CD8-positive, alpha-beta T cell (primary cell): ENCODE measurements at regions of chr7 and their contacts with region 1.

Region 1: GRCh38 chr7:128862571-128863432 is at the start of gene ATP6V1F:
- DNase-seq: peak; percentile 97 to 100 (median 99)
- ATAC-seq: peak; percentile 87
- H3K4me3 ChIP-seq: peak within 1 kb of the TSS; percentile 80 to 92
- H3K4me3 Mint-ChIP-seq: peak within 1 kb of the TSS; percentile 96
- H3K27ac ChIP-seq: peak within 1 kb of the TSS; percentile 71 to 74
- H3K27ac Mint-ChIP-seq: peak within 1 kb of the TSS; percentile 94
- H3K4me1 ChIP-seq: peaks cover 17% of the 10 kb centered on the region
- H3K4me1 Mint-ChIP-seq: peaks cover 34% of the 10 kb centered on the region
- H3K27me3 ChIP-seq: no peaks in the 10 kb centered on the region
- H3K27me3 Mint-ChIP-seq: no peaks in the 10 kb centered on the region
- CTCF ChIP-seq: no peak
- total RNA-seq, gene ATP6V1F: 54.8 to 59.3 TPM

Region 2: DNA sequence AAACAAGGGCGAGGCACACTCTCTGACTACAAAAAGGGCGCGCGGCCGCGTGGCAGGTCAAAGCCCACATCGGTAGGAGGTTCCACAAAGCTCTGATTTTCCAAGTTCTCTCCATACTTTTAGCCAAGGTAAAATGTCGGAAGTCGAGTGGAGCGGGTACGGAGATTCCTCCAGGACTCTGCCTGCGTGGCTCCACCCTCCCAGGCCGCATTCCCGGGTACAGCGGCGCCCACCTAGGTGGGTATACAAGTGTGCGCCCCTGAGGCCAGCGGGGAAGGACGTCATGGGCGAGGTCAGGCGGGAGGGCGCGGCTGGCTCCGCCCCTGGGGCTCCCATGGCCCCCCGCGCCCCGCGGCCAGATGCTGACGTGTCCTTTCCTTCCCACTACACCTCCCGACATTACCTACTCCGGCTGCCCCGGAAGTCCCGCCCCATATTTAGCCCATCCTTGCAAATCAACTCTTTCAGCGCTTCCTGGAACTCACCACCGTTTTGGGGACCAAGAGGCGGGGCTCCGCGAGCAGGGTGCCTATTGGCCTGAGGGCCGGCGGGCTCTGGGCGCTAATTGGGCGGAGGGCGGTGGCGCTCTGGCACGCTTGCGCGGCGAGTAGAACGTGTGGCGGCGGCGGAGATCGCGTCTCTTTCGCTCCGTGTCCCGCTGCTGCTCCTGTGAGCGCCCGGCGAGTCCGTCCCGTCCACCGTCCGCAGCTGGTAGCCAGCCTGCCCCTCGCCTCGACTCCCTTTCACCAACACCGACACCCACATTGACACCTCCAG is 1211.1 kb before region 1 on chr7 and contains the start of gene SND1:
- CTCF ChIA-PET with region 1: no interaction called
- POLR2A ChIA-PET with region 1: no interaction called
- intact Hi-C with region 1: loop called in 1 of 2 experiments (anchors 10 kb)
- DNase-seq: peak; percentile 96 to 100 (median 98)
- ATAC-seq: peak; percentile 94
- H3K4me3 ChIP-seq: peak within 1 kb of the TSS; percentile 82 to 98
- H3K4me3 Mint-ChIP-seq: peak within 1 kb of the TSS; percentile 98
- H3K27ac ChIP-seq: peak within 1 kb of the TSS; percentile 92 to 98
- H3K27ac Mint-ChIP-seq: peak within 1 kb of the TSS; percentile 99
- H3K4me1 ChIP-seq: peaks cover 35% of the 10 kb centered on the region
- H3K4me1 Mint-ChIP-seq: peaks cover 50% of the 10 kb centered on the region
- H3K27me3 ChIP-seq: no peaks in the 10 kb centered on the region
- H3K27me3 Mint-ChIP-seq: no peaks in the 10 kb centered on the region
- CTCF ChIP-seq: no peak
- total RNA-seq, gene SND1: 87.7 to 101 TPM

Region 3: GRCh38 chr7:128455551-128456254 is 407.1 kb before region 1 on chr7 and contains the start of gene HILPDA:
- CTCF ChIA-PET with region 1: no interaction called
- POLR2A ChIA-PET with region 1: no interaction called
- intact Hi-C with region 1: loop called in 1 of 2 experiments (anchors 2 kb)
- DNase-seq: peak; percentile 84 to 98 (median 93)
- ATAC-seq: peak; percentile 92
- H3K4me3 ChIP-seq: peak within 1 kb of the TSS; percentile 83 to 91
- H3K4me3 Mint-ChIP-seq: peak within 1 kb of the TSS; percentile 95
- H3K27ac ChIP-seq: peak within 1 kb of the TSS; percentile 60 to 73
- H3K27ac Mint-ChIP-seq: peak within 1 kb of the TSS; percentile 98
- H3K4me1 ChIP-seq: peaks cover 19% of the 10 kb centered on the region
- H3K4me1 Mint-ChIP-seq: peaks cover 26% of the 10 kb centered on the region
- H3K27me3 ChIP-seq: no peaks in the 10 kb centered on the region
- H3K27me3 Mint-ChIP-seq: no peaks in the 10 kb centered on the region
- CTCF ChIP-seq: no peak
- total RNA-seq, gene HILPDA: 1.3 to 2.0 TPM

Region 4: GRCh38 chr7:128791121-128791961 is 71.5 kb before region 1 on chr7:
- CTCF ChIA-PET with region 1: no interaction called
- POLR2A ChIA-PET with region 1: interaction called, 6 read pairs
- intact Hi-C with region 1: loop called (anchors 1 to 2 kb)
- DNase-seq: peak; percentile 40 to 89 (median 79)
- ATAC-seq: peak; percentile 95
- H3K4me3 ChIP-seq: peak overlapping the region; percentile 71 to 89
- H3K4me3 Mint-ChIP-seq: peak overlapping the region; percentile 84
- H3K27ac ChIP-seq: peak overlapping the region in 1 of 2 experiments; percentile 19
- H3K27ac Mint-ChIP-seq: no peak overlapping the region
- H3K4me1 ChIP-seq: peaks cover 9% of the 10 kb centered on the region
- H3K4me1 Mint-ChIP-seq: peaks cover 20% of the 10 kb centered on the region
- H3K27me3 ChIP-seq: no peaks in the 10 kb centered on the region
- H3K27me3 Mint-ChIP-seq: no peaks in the 10 kb centered on the region
- CTCF ChIP-seq: no peak

Region 5: DNA sequence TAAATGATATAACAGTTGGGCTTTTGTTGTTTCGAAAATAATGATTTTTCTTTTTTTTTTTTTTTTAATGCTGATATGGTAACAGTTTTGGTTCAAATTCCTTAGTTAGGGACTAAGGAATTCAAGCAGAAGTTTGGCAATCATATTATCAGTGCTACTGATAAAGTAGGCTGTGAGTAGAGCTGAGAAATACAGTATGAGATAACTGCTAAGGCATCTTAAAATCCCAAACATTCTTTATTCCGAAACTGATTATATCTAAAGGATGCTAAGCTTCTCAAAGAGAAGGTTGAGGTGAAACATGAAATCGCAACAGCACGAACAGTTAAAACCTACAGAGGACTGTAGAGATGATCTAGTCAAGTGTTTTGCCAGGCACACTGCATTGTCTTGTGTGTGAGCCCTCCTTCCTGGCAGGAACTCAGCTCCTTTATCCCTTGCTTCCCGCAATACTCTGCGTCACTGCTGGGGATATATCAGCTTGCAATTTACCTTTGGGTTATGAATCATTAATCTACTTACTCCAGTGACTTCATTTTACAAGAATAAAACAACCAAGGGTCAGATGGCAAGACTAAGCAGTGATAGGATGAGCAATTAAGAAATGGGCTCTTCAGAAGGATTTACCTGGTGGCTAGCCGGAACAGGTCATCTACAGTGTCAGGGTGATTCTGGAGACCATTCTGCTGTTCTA is 111.6 kb after region 1 on chr7:
- CTCF ChIA-PET with region 1: no interaction called
- POLR2A ChIA-PET with region 1: no interaction called
- intact Hi-C with region 1: no loop called
- DNase-seq: no peak
- ATAC-seq: no peak
- H3K4me3 ChIP-seq: no peak overlapping the region
- H3K4me3 Mint-ChIP-seq: no peak overlapping the region
- H3K27ac ChIP-seq: no peak overlapping the region
- H3K27ac Mint-ChIP-seq: no peak overlapping the region
- H3K4me1 ChIP-seq: no peaks in the 10 kb centered on the region
- H3K4me1 Mint-ChIP-seq: no peaks in the 10 kb centered on the region
- H3K27me3 ChIP-seq: no peaks in the 10 kb centered on the region
- H3K27me3 Mint-ChIP-seq: no peaks in the 10 kb centered on the region
- CTCF ChIP-seq: no peak